CD4-positive, alpha-beta memory T cell (primary cell): ENCODE measurements at regions of chr6 and their contacts with region 1.

Region 1: GRCh38 chr6:105733565-105734162 is 330.8 kb upstream of the PREP start:
- DNase-seq: peak in 4 of 5 donors; percentile 39 to 48 (median 42)
- H3K4me3 ChIP-seq: no peak overlapping the region
- H3K4me3 Mint-ChIP-seq: no peak overlapping the region
- H3K27ac ChIP-seq: no peak overlapping the region
- H3K27ac Mint-ChIP-seq: peak overlapping the region in 1 of 7 donors; percentile 21
- H3K4me1 ChIP-seq: no peaks in the 10 kb centered on the region
- H3K4me1 Mint-ChIP-seq: peaks cover 5 to 12% (median 8%) of the 10 kb centered on the region in 4 donors
- H3K27me3 ChIP-seq: no peaks in the 10 kb centered on the region
- H3K27me3 Mint-ChIP-seq: no peaks in the 10 kb centered on the region

Region 2: GRCh38 chr6:105431226-105431625 is 302.4 kb before region 1 on chr6:
- CTCF ChIA-PET with region 1: interaction called, 3 read pairs
- POLR2A ChIA-PET with region 1: no interaction called
- intact Hi-C with region 1: loop called (anchors 2 kb)
- DNase-seq: peak in 4 of 5 donors; percentile 35 to 49 (median 42)
- H3K4me3 ChIP-seq: no peak overlapping the region
- H3K4me3 Mint-ChIP-seq: no peak overlapping the region
- H3K27ac ChIP-seq: no peak overlapping the region
- H3K27ac Mint-ChIP-seq: no peak overlapping the region
- H3K4me1 ChIP-seq: no peaks in the 10 kb centered on the region
- H3K4me1 Mint-ChIP-seq: no peaks in the 10 kb centered on the region
- H3K27me3 ChIP-seq: no peaks in the 10 kb centered on the region
- H3K27me3 Mint-ChIP-seq: peaks cover 0 to 2% of the 10 kb centered on the region in 2 donors

Region 3: DNA sequence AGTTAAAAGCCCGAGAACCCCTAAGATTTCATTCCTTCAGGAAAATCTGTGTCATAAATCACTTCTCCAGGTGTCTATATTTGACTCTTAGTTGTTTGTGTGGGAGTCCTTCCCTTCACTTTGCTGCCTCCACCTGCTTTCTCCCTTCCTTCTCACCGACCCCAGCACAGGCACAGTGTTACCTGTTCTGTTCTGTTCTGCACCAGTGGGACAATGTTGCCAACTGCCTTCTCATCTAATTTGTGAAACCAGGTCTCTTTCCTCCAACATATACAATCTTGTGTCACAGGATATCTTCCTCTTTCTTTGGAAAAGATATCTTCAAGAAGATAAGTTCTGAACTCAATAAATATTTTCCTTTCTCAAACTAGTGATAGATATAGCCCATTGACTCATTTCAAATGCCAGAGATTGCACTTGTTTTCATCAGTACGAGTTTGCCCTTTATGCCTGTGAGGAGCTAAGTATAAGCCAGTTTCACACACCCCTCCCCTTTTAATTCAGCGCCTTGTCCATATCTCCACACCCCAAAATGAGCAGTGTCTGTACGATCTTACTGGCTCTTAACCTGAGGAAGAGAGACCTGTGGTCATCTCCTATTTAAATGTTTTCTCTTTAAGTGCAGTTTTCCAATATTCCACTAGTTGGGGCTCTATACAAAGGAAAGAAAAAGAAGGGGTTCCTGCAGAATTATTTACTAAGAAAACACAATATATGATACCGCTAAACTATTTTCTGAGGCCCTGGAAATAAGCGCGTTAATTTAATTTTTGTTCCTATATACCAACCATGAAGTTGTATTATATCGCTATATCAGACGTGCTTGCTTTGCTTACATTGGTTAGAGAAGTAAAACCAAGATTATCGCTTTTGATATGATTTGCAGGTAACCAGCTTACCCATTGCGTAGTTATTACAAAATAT is 249.2 kb before region 1 on chr6:
- CTCF ChIA-PET with region 1: interaction called, 5 read pairs
- POLR2A ChIA-PET with region 1: no interaction called
- intact Hi-C with region 1: loop called (anchors 1 kb)
- DNase-seq: peak in 4 of 5 donors; percentile 34 to 55 (median 44)
- H3K4me3 ChIP-seq: no peak overlapping the region
- H3K4me3 Mint-ChIP-seq: peak overlapping the region; percentile 20 to 71 (median 62)
- H3K27ac ChIP-seq: no peak overlapping the region
- H3K27ac Mint-ChIP-seq: peak overlapping the region in 6 of 7 donors; percentile 7 to 76 (median 60)
- H3K4me1 ChIP-seq: peaks cover 32% of the 10 kb centered on the region
- H3K4me1 Mint-ChIP-seq: peaks cover 13 to 34% (median 18%) of the 10 kb centered on the region in 4 donors
- H3K27me3 ChIP-seq: no peaks in the 10 kb centered on the region
- H3K27me3 Mint-ChIP-seq: no peaks in the 10 kb centered on the region

Region 4: DNA sequence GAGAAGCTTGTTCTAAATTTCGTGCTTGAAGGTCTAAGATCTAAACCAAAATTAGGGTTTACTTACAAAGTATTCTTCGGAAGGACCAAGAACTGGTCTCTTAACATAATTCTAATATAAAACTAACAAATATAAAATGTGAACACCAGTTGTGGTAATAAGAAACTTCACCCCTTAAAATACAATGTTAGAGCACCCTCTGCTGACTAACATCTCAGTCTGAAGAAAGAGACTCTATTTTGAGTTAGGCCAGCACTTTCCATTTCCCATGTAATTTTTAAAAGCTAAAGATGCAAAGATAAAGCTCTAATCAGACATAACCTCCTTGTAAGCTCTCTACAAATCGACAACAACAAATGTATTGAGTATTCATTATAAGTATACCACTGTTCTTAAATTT is 567.3 kb after region 1 on chr6:
- CTCF ChIA-PET with region 1: interaction called, 3 read pairs
- POLR2A ChIA-PET with region 1: no interaction called
- intact Hi-C with region 1: loop called (anchors 2 kb)
- DNase-seq: peak in 4 of 5 donors; percentile 10 to 36 (median 25)
- H3K4me3 ChIP-seq: no peak overlapping the region
- H3K4me3 Mint-ChIP-seq: no peak overlapping the region
- H3K27ac ChIP-seq: no peak overlapping the region
- H3K27ac Mint-ChIP-seq: no peak overlapping the region
- H3K4me1 ChIP-seq: peaks cover 3% of the 10 kb centered on the region
- H3K4me1 Mint-ChIP-seq: peaks cover 6 to 12% (median 10%) of the 10 kb centered on the region in 4 donors
- H3K27me3 ChIP-seq: no peaks in the 10 kb centered on the region
- H3K27me3 Mint-ChIP-seq: no peaks in the 10 kb centered on the region